ENCODE measurements at regions of chr1 and their contacts with region 1.

Region 1: DNA sequence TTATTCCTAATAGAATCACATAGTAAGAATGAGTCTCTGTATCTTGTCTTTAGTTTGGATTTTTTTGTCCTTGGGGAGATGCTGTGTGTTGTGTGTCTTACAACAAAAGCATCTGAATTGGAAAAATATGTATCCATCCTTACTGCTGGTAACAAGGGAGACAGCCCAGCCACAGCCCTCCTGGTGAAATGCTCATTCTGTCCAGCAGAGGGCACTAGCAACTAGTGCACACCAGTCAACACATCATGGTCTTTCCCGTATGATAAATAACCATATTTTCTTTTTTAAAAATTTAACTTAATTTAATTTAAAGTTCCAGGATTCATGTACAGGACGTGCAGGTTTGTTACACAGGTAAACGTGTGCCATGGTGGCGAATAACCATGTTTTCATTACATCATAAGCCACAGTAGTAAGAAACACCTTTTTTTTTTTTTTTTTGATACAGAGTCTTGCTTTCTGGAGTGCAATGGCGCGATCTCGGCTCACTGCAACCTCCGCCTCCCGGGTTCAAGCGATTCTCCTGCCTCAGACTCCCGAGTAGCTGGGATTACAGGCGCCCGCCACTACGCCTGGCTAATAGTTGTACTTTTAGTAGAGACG is 245.1 kb downstream of the PTBP2 start:
- DNase-seq: peak; percentile 28
- ATAC-seq: peak; percentile 95
- H3K4me3 ChIP-seq: no peak overlapping the region
- H3K27ac ChIP-seq: no peak overlapping the region
- H3K4me1 ChIP-seq: no peaks in the 10 kb centered on the region
- H3K27me3 ChIP-seq: no peaks in the 10 kb centered on the region
- CTCF ChIP-seq: peak; percentile 89 to 90 (median 89)
- EP300 ChIP-seq: no peak
- POLR2A ChIP-seq: no peak
- RAD21 ChIP-seq: peak; percentile 94

Region 2: GRCh38 chr1:96236156-96236739 is 730.4 kb before region 1 on chr1:
- CTCF ChIA-PET with region 1: no interaction called
- POLR2A ChIA-PET with region 1: no interaction called
- RAD21 ChIA-PET with region 1: no interaction called
- SMC1A ChIA-PET with region 1: no interaction called
- in situ Hi-C with region 1: no loop called
- intact Hi-C with region 1: loop called (anchors 10 kb)
- DNase-seq: no peak
- ATAC-seq: peak; percentile 48; the same call in 1 of the 3 replicates
- H3K4me3 ChIP-seq: no peak overlapping the region
- H3K27ac ChIP-seq: no peak overlapping the region
- H3K4me1 ChIP-seq: no peaks in the 10 kb centered on the region
- H3K27me3 ChIP-seq: no peaks in the 10 kb centered on the region
- CTCF ChIP-seq: peak; percentile 29 to 52 (median 47); a peak in 5 of 6 replicates
- EP300 ChIP-seq: no peak
- POLR2A ChIP-seq: no peak
- RAD21 ChIP-seq: peak; percentile 64

Region 3: DNA sequence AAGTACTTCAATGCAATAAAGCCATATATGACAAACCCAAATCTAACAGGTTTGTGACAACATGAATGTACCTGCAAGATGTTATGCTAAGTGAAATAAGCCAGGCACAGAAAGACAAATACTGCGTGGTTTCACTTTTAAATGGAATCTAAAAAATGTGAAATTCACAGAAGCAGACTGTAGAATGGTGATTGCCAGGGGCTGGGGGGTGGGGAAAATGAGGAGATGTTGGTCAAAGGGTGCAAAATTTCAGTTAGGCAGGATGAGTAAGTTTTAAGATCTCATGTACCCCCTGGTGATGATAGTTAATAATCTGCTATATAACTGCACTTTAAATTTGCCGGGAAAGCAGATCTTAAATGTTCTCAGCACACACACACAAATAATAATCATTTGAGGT is 84.5 kb before region 1 on chr1:
- CTCF ChIA-PET with region 1: no interaction called
- POLR2A ChIA-PET with region 1: no interaction called
- RAD21 ChIA-PET with region 1: no interaction called
- SMC1A ChIA-PET with region 1: no interaction called
- in situ Hi-C with region 1: no loop called
- intact Hi-C with region 1: no loop called
- DNase-seq: no peak
- ATAC-seq: no peak
- H3K4me3 ChIP-seq: no peak overlapping the region
- H3K27ac ChIP-seq: no peak overlapping the region
- H3K4me1 ChIP-seq: no peaks in the 10 kb centered on the region
- H3K27me3 ChIP-seq: no peaks in the 10 kb centered on the region
- CTCF ChIP-seq: no peak
- EP300 ChIP-seq: no peak
- POLR2A ChIP-seq: no peak
- RAD21 ChIP-seq: no peak

Region 4: DNA sequence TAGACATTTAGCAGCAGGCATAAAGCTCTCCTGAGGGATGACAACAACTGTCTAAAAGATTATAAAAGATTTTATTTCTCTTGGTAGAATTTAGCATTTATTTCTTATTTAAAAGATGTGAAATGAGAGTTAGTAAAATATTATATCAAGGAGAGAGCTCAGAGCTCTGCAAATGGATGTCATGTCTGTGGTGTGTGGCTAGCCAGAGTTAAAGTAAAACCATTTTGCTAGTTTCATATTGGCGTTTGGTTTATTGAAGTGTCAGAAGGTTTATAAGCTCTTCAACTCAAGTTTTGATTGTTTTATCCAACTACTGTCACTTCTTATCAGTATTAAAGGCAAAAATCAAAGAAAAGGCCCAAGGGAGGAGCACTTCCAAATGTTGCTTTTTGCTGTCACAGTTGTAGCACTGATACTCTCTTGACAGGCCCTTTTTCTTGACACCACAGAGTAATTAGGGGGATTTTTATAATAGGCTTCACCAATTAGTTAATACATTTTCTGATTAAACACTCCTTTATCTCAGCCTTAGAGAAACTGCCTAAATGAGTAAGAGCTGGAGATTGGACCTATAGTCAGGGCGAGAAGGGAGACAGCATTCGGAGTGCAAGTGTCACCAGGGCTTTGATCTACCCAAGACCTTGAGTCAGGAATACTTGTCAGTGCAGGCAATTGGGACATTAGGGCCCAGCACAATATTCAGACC is 11.2 kb before region 1 on chr1:
- CTCF ChIA-PET with region 1: interaction called, 13 read pairs
- POLR2A ChIA-PET with region 1: no interaction called
- RAD21 ChIA-PET with region 1: no interaction called
- SMC1A ChIA-PET with region 1: interaction called, 4 read pairs
- in situ Hi-C with region 1: no loop called
- intact Hi-C with region 1: no loop called
- DNase-seq: no peak
- ATAC-seq: peak; percentile 76
- H3K4me3 ChIP-seq: no peak overlapping the region
- H3K27ac ChIP-seq: no peak overlapping the region
- H3K4me1 ChIP-seq: no peaks in the 10 kb centered on the region
- H3K27me3 ChIP-seq: no peaks in the 10 kb centered on the region
- CTCF ChIP-seq: no peak
- EP300 ChIP-seq: no peak
- POLR2A ChIP-seq: no peak
- RAD21 ChIP-seq: no peak

Region 5: DNA sequence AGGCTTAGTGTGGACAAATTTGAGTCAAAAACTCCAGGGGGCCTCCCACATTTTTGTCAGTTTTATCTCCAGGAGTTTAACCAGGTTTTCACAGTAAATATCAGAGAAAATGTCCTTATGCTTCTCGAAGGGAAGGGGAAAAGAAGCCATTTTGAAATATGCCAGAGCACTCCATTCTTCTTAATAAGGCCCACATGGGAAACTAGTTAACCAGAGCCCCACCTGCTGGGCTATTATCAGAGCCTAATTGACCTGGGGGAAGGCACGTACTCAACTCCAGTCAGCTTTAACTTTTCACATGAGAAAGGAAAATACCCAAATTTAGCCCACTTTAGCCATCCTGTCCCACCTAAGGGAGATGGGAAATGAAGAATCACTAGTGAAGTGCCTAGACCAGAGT is 51.3 kb after region 1 on chr1:
- CTCF ChIA-PET with region 1: interaction called, 6 read pairs
- POLR2A ChIA-PET with region 1: no interaction called
- RAD21 ChIA-PET with region 1: interaction called, 7 read pairs
- SMC1A ChIA-PET with region 1: interaction called, 11 read pairs
- in situ Hi-C with region 1: no loop called
- intact Hi-C with region 1: no loop called
- DNase-seq: no peak
- ATAC-seq: peak; percentile 65
- H3K4me3 ChIP-seq: no peak overlapping the region
- H3K27ac ChIP-seq: no peak overlapping the region
- H3K4me1 ChIP-seq: no peaks in the 10 kb centered on the region
- H3K27me3 ChIP-seq: no peaks in the 10 kb centered on the region
- CTCF ChIP-seq: peak in 1 of 3 experiments; percentile 11; a peak in 1 of 6 replicates
- EP300 ChIP-seq: no peak
- POLR2A ChIP-seq: no peak
- RAD21 ChIP-seq: 0 out of 2 replicates have a peak, but pooled peaks have one; percentile 13

Region 6: GRCh38 chr1:97038410-97038809 is 71.8 kb after region 1 on chr1:
- CTCF ChIA-PET with region 1: no interaction called
- POLR2A ChIA-PET with region 1: no interaction called
- RAD21 ChIA-PET with region 1: no interaction called
- SMC1A ChIA-PET with region 1: no interaction called
- in situ Hi-C with region 1: no loop called
- intact Hi-C with region 1: no loop called
- DNase-seq: no peak
- ATAC-seq: peak; percentile 81
- H3K4me3 ChIP-seq: no peak overlapping the region
- H3K27ac ChIP-seq: no peak overlapping the region
- H3K4me1 ChIP-seq: no peaks in the 10 kb centered on the region
- H3K27me3 ChIP-seq: no peaks in the 10 kb centered on the region
- CTCF ChIP-seq: no peak
- EP300 ChIP-seq: no peak
- POLR2A ChIP-seq: no peak
- RAD21 ChIP-seq: no peak

Region 7: DNA sequence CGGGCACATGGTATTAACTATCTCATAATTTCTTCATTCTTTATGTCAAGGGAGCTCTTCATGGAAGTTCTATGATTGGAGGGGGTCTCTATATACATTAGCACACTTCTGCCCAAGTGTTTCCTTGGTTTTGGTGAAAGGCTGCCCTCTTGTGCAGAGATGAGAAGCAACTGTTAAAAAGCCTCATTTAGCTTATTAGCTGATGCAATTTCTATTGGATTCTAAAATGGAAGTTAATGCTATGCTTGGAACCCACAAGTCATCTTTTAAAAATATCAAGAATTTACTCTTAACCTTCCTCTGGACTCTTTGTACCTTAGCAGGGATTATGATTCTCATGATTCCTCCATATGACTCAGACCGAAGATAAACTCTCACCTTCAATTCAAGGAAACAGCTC is 83.9 kb after region 1 on chr1:
- CTCF ChIA-PET with region 1: interaction called, 5 read pairs
- POLR2A ChIA-PET with region 1: no interaction called
- RAD21 ChIA-PET with region 1: interaction called, 12 read pairs
- SMC1A ChIA-PET with region 1: interaction called, 6 read pairs
- in situ Hi-C with region 1: no loop called
- intact Hi-C with region 1: loop called (anchors 1 kb)
- DNase-seq: no peak
- ATAC-seq: peak; percentile 62
- H3K4me3 ChIP-seq: no peak overlapping the region
- H3K27ac ChIP-seq: no peak overlapping the region
- H3K4me1 ChIP-seq: no peaks in the 10 kb centered on the region
- H3K27me3 ChIP-seq: no peaks in the 10 kb centered on the region
- CTCF ChIP-seq: peak; percentile 6 to 34 (median 8); a peak in 3 of 6 replicates
- EP300 ChIP-seq: no peak
- POLR2A ChIP-seq: no peak
- RAD21 ChIP-seq: peak; percentile 38

Region 8: DNA sequence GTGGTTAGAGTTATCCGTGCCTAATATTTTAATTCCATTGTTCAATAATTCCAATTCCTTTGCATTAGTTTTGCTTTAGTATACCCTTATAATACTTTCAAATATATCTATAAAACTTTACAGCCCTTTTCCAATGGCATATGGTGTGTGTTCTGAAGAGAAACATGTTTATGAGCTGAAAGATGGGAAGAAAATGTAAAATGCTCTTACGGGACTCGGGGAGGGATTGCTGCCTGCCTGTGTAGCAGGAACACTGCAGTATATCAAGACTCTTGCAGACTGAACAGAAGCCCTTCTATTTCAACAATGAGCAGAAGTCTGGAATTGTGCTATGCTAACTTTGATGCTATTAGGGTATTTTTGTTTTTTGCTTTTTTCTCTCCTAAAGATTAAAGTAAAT is 161.8 kb after region 1 on chr1:
- CTCF ChIA-PET with region 1: no interaction called
- POLR2A ChIA-PET with region 1: no interaction called
- RAD21 ChIA-PET with region 1: no interaction called
- SMC1A ChIA-PET with region 1: no interaction called
- in situ Hi-C with region 1: no loop called
- intact Hi-C with region 1: no loop called
- DNase-seq: no peak
- ATAC-seq: no peak
- H3K4me3 ChIP-seq: no peak overlapping the region
- H3K27ac ChIP-seq: no peak overlapping the region
- H3K4me1 ChIP-seq: no peaks in the 10 kb centered on the region
- H3K27me3 ChIP-seq: no peaks in the 10 kb centered on the region
- CTCF ChIP-seq: no peak
- EP300 ChIP-seq: no peak
- POLR2A ChIP-seq: no peak
- RAD21 ChIP-seq: no peak

Region 9: DNA sequence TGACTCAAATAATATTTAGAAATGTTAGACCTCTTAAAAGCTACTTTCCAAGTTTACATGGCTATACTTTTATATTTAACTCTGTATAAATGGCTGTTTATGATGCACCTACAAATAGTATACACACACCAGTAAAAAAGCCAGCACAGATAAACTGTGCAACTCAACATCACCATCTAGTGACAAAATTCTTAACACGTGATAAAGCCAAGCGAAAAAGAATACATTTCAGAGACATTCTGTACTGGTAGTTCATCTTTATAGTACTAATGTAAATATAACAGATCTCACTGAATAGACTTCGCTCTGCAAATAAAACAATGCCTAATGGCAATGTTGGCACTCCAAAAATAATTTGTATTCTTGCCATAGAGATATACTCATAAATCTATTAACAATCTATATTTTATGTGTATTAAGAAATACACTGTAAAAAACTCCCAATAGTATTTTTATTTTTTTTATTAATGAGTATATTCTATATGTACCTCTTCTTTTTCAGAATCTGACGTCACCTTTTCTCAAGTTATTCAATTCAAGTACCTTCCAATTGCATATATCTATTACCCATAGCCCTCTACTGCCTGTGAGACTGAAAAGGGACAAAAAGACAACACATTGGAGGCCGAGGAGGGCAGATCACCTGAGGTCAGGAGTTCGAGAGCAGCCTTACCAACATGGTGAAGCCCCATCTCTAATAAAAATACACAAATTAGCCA is 854.0 kb after region 1 on chr1:
- CTCF ChIA-PET with region 1: no interaction called
- POLR2A ChIA-PET with region 1: no interaction called
- RAD21 ChIA-PET with region 1: no interaction called
- SMC1A ChIA-PET with region 1: no interaction called
- in situ Hi-C with region 1: loop called (anchors 25 kb)
- intact Hi-C with region 1: loop called (anchors 2 kb)
- DNase-seq: no peak
- ATAC-seq: peak; percentile 78
- H3K4me3 ChIP-seq: no peak overlapping the region
- H3K27ac ChIP-seq: no peak overlapping the region
- H3K4me1 ChIP-seq: no peaks in the 10 kb centered on the region
- H3K27me3 ChIP-seq: no peaks in the 10 kb centered on the region
- CTCF ChIP-seq: peak; percentile 11 to 56 (median 36); a peak in 5 of 6 replicates
- EP300 ChIP-seq: no peak
- POLR2A ChIP-seq: no peak
- RAD21 ChIP-seq: peak; percentile 72

Region 10: GRCh38 chr1:98468111-98468717 is 1501.6 kb after region 1 on chr1:
- CTCF ChIA-PET with region 1: no interaction called
- POLR2A ChIA-PET with region 1: no interaction called
- RAD21 ChIA-PET with region 1: no interaction called
- SMC1A ChIA-PET with region 1: no interaction called
- in situ Hi-C with region 1: no loop called
- intact Hi-C with region 1: loop called (anchors 5 kb)
- DNase-seq: no peak
- ATAC-seq: no peak
- H3K4me3 ChIP-seq: no peak overlapping the region
- H3K27ac ChIP-seq: no peak overlapping the region
- H3K4me1 ChIP-seq: no peaks in the 10 kb centered on the region
- H3K27me3 ChIP-seq: no peaks in the 10 kb centered on the region
- CTCF ChIP-seq: peak; percentile 36 to 61 (median 57); a peak in 4 of 6 replicates
- EP300 ChIP-seq: no peak
- POLR2A ChIP-seq: no peak
- RAD21 ChIP-seq: peak; percentile 80

Measured in GM12878 (cell line).